Dendritic cell treated with granulocyte-macrophage colony-stimulating factor and Interleukin-4, amounts not matched to agents 40 ng/mL and 50 ng/mL, for 4 days (primary cell): ENCODE measurements at regions of chr4 and their contacts with region 1.

Region 1: GRCh38 chr4:82373816-82374625 is at the start of gene HNRNPD:
- H3K4me3 Mint-ChIP-seq: peak within 1 kb of the TSS; percentile 86
- H3K27ac Mint-ChIP-seq: peak within 1 kb of the TSS; percentile 97
- H3K4me1 Mint-ChIP-seq: peaks cover 43% of the 10 kb centered on the region
- H3K27me3 Mint-ChIP-seq: no peaks in the 10 kb centered on the region

Region 2: GRCh38 chr4:82284858-82285805 is 88.9 kb before region 1 on chr4:
- intact Hi-C with region 1: loop called (anchors 2 kb)
- H3K4me3 Mint-ChIP-seq: peak overlapping the region; percentile 67
- H3K27ac Mint-ChIP-seq: peak overlapping the region; percentile 57
- H3K4me1 Mint-ChIP-seq: peaks cover 14% of the 10 kb centered on the region
- H3K27me3 Mint-ChIP-seq: peaks cover 20% of the 10 kb centered on the region

Region 3: DNA sequence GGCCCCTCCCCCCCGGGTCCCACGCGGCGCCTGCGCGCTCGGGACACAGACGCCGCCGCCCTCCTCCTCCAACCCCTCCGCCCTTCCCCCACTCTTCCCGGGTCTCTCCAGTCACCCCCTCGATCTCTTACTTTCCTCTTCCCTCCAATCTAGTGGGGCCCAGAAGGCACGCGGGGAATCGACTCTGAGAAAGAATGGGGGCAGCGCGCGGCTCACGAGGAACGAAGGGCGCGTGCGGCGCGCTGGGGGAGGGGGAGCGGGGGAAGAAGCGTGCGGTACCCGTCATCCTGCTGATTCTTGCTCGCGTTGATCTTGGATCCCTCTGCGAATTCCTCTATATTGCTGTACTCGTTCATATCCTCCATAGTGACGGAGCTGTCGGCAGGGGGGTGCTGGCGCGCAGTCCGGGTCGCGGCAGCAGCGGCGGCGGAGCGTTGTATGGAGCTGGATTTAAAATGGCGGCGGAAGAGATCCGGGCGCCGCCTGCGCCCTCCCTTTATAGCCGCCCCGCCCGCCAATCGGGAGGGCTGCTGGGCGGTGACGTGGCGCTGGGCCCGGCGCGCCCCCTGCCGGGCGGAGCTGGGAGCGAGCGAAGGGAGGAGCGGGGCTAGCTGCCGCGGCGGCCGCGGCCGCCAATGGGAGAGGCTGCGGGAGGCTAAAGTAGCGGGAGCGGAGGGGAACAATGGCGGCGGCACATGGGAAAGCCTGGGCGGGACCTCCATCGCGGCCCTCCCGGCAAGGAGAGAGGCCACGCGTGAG is 55.1 kb after region 1 on chr4:
- intact Hi-C with region 1: loop called (anchors 1 kb)
- H3K4me3 Mint-ChIP-seq: peak overlapping the region; percentile 87
- H3K27ac Mint-ChIP-seq: peak overlapping the region; percentile 93
- H3K4me1 Mint-ChIP-seq: peaks cover 42% of the 10 kb centered on the region
- H3K27me3 Mint-ChIP-seq: no peaks in the 10 kb centered on the region

Region 4: DNA sequence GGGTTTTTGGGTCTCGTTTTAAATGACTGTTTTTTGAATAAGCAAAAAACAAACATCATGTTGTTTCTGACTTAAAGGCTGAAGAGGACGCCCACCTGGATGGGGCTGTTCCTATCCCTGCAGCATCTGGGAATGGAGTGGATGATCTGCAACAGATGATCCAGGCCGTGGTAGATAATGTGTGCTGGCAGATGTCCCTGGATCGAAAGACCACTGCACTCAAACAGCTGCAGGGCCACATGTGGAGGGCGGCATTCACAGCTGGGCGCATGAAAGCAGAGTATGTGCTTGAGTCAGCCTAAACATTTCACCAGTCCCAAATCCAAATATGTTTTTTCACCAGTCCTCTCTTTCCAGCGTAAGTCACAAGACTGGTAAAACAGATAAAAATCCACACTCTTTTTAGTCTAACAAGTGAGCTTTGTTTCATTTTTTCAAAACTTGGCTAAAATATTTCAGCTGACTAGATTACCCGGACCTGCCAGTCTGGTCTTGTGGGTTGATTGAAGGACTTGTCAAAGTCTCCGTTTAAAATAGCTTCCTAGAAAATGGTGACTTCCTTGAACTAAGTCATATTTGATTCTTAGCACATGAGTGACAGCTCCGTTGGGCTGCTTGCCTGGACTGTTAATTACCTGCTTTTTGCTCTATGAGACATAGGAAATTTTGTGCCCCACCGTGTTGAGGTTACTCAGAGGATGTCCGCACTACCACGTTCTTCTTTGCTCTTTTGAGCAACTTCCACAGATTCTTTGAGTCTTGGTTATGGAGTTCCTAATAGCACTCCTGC is 77.1 kb after region 1 on chr4:
- intact Hi-C with region 1: no loop called
- H3K4me3 Mint-ChIP-seq: no peak overlapping the region
- H3K27ac Mint-ChIP-seq: no peak overlapping the region
- H3K4me1 Mint-ChIP-seq: no peaks in the 10 kb centered on the region
- H3K27me3 Mint-ChIP-seq: no peaks in the 10 kb centered on the region

Region 5: GRCh38 chr4:82652062-82652461 is 278.0 kb after region 1 on chr4:
- intact Hi-C with region 1: no loop called
- H3K4me3 Mint-ChIP-seq: no peak overlapping the region
- H3K27ac Mint-ChIP-seq: no peak overlapping the region
- H3K4me1 Mint-ChIP-seq: peaks cover 17% of the 10 kb centered on the region
- H3K27me3 Mint-ChIP-seq: peaks cover 2% of the 10 kb centered on the region

Region 6: GRCh38 chr4:82900331-82901128 is 526.5 kb after region 1 on chr4 and contains the start of gene THAP9:
- intact Hi-C with region 1: loop called (anchors 2 kb)
- H3K4me3 Mint-ChIP-seq: no peak within 1 kb of the TSS
- H3K27ac Mint-ChIP-seq: no peak within 1 kb of the TSS
- H3K4me1 Mint-ChIP-seq: peaks cover 11% of the 10 kb centered on the region
- H3K27me3 Mint-ChIP-seq: no peaks in the 10 kb centered on the region

Region 7: DNA sequence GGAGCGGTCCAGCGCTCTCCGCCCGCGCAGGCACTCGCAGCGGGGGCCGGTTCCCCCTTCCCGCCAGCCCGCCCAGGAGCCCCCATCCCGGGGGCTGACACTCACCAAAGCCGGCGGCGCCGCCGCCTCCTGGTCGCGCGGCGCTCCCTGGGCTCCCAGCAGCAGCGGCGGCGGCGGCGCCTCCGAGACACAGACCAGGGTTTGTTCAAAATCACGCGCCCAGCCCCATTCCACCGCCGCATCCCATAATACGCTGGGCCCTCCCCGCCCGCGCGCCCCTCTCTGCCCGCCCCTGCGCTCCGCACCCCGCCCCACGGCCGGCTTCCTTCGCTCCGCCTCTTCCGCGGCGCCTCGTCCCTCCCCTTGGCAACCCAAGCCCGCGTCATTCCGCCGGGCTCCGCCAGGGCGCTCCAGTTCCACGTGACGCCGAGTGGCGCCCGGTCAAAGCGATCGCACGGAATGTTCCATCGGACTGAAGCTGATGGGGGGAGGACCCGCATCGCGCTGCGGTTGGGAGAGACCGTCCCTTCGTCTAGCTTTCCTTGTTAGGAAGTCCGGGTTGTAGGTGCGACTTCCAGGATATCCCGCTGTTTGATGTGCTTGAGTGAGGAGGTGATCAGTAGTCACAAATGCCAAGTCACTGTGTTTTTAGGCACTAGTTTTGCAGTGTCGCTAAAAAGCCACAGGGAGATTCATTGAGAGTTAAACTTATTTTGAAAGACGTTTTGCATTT is 638.8 kb after region 1 on chr4:
- intact Hi-C with region 1: loop called (anchors 5 kb)
- H3K4me3 Mint-ChIP-seq: peak overlapping the region; percentile 86
- H3K27ac Mint-ChIP-seq: peak overlapping the region; percentile 95
- H3K4me1 Mint-ChIP-seq: peaks cover 33% of the 10 kb centered on the region
- H3K27me3 Mint-ChIP-seq: no peaks in the 10 kb centered on the region